Panc1 (cell line): ENCODE measurements at regions of chr6 and their contacts with region 1.

Region 1: DNA sequence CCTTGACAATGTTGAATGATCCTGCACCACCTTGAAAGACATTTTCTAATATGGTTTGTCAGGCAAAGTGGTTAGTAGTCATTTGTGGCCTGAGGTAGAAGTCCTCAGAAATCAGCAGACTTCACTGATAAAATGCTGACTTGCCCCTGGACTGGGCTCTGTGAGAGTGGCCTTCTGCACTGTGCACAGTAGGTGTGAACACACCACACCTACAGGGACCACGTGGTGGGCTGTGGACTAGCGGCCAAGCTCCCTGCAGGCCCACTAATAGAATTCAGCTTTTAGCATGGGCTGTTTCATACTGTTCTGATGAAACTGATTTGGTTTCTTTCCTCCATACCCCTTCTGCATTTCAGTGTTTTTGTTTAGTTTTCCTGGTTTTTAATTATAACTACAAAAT is 7.3 kb downstream of the BPHL start:
- DNase-seq: no peak
- ATAC-seq: no peak; the same call in 1 of the 2 replicates
- H3K4me3 ChIP-seq: no peak overlapping the region
- H3K27ac ChIP-seq: no peak overlapping the region
- H3K4me1 ChIP-seq: no peaks in the 10 kb centered on the region
- H3K27me3 ChIP-seq: no peaks in the 10 kb centered on the region
- CTCF ChIP-seq: no peak

Region 2: DNA sequence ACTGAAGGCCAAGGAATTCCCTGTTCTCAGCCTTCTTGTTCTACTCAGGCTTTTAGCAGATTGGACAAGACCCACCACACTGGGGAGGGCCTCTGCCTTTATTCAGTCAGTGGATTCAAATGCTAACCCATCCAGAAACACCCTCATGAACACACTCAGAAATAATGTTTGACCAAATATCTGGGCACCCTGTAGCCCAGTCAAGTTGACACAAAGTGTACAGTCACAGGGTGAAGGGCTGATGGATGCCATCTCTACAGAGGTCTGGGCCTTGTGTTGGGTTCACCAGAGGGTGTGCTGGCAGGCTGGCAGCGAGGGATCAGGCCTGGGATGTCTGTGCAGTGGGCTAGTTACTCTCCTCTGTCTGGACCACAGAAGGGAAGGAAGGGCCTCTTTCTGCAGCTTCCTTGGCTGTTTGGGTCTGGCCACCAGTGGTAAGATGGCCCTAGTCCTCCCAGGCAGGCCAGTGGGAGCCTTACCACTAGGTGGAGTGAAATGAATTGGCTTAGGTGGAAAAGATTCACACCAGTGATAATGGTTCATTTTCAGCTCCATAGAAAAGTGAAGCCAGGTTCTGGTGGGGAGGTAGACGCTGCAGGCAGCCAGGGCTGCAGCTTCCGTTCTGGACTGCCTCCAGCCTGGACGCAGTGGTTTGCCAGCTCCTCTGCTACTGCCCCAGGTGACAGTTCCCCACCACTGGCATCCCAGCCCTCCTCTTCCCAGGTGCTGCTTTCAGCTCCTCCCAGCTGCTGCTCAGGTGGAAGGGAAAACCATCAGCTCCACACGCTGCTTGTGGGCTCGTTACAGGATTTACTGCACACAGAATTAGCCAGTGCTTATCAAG is 22.3 kb after region 1 on chr6:
- CTCF ChIA-PET with region 1: no interaction called
- POLR2A ChIA-PET with region 1: no interaction called
- in situ Hi-C with region 1: no loop called
- intact Hi-C with region 1: no loop called
- DNase-seq: no peak
- ATAC-seq: peak; percentile 60
- H3K4me3 ChIP-seq: no peak overlapping the region
- H3K27ac ChIP-seq: no peak overlapping the region
- H3K4me1 ChIP-seq: no peaks in the 10 kb centered on the region
- H3K27me3 ChIP-seq: no peaks in the 10 kb centered on the region
- CTCF ChIP-seq: no peak; the same call in 1 of the 2 replicates

Region 3: DNA sequence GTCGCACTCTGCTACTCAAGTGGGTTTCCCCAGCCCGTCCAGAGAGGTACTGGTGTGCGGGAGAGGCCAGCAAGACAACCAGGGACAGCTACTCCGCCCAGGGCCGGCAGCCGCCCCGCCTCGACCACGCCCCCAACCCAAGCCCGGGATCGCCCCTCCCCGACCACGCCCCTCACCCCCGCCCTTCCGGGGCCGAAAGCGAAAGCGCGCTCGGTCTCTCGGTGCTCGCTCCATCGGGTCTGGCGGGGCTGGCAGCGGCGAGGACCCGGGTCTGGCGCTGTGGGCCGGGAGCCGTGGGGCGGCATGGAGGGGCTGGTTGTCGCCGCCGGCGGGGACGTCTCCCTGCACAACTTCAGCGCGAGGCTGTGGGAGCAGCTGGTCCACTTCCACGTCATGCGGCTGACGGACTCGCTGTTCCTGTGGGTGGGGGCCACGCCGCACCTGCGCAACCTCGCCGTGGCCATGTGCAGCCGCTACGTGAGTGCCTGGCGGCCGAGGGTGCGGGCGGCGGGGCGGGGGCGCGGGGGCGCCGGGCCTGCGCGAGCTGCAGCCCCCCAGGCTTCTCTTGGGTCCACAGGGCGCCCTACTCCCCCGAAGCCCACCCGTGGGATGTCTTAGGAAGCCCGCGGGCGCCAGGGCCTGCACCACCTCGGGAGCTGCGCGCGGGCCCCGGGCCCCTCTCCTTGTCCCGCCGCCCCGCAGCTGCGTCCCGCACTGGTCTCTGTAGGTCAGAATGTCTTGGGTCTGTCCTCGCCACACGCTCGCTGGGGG is 133.1 kb after region 1 on chr6 and contains the start of gene PSMG4:
- CTCF ChIA-PET with region 1: interaction called, 5 read pairs
- POLR2A ChIA-PET with region 1: interaction called, 4 read pairs
- in situ Hi-C with region 1: no loop called
- intact Hi-C with region 1: loop called (anchors 2 kb)
- DNase-seq: peak; percentile 33
- ATAC-seq: peak; percentile 93
- H3K4me3 ChIP-seq: peak within 1 kb of the TSS; percentile 86 to 94
- H3K27ac ChIP-seq: peak within 1 kb of the TSS; percentile 88
- H3K4me1 ChIP-seq: peaks cover 18% of the 10 kb centered on the region
- H3K27me3 ChIP-seq: no peaks in the 10 kb centered on the region
- CTCF ChIP-seq: no peak
- total RNA-seq, gene PSMG4: 27.0 TPM

Region 4: DNA sequence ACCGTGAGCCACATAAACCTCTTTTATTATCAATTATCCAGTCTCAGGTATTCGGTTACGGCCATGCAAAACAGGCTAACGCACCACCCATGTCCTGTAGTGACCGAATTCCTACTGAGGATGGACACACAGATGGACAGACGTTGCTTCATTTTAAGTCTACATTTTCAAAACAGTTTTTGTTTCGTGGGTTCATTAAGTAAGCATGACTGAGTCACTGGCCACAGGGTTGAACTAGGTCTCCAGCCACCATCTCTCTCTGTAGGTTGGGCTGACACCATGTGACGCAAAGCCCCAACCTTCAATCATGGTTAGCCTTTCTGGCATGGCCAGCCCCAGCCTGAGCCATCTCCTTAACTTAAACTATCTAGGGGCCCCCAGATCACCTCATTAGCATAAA is 441.0 kb after region 1 on chr6:
- CTCF ChIA-PET with region 1: no interaction called
- POLR2A ChIA-PET with region 1: no interaction called
- in situ Hi-C with region 1: no loop called
- intact Hi-C with region 1: no loop called
- DNase-seq: no peak
- ATAC-seq: no peak
- H3K4me3 ChIP-seq: no peak overlapping the region
- H3K27ac ChIP-seq: no peak overlapping the region
- H3K4me1 ChIP-seq: no peaks in the 10 kb centered on the region
- H3K27me3 ChIP-seq: no peaks in the 10 kb centered on the region; the same call in 1 of the 2 replicates
- CTCF ChIP-seq: no peak